PC-9 (cell line): ENCODE measurements at regions of chr6 and their contacts with region 1.

Region 1: DNA sequence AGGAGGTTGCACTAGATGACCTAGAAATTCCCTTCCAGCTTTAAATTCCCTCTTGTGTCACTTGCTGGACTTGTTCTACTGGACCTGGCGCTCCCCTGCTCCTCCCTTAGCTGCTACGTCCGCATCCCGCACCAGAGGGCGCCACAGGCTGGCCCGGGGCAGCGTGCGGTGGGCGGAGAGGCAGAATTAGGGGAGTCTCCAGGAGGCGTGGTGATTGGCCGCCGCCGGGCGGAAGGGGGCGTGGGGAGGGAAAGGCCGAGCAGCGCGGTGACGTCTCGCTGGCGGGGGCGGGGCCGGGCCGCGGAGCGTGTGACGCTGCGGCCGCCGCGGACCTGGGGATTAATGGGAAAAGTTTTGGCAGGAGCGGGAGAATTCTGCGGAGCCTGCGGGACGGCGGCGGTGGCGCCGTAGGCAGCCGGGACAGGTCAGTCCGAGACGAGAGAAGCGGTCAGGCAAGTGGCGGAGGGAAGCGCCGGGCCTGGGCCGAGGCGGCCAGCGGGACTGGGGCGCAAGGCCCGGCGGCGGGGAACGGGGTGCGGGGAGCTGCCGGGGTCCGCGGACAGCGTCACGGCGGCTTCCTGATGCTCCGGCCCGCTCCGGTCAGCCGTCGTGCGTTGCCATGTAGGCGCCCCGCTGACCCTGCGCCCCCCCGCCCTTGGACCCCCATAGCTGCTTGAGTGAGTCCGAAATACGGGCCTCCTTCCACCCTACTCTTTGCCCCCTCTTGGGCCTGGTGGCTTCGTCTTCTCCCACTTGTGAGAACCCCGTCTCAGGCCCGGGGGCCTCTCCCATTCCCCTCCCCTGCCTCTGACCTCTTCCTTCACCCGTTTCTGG is at the start of gene PPARD:
- DNase-seq: peak; percentile 91 to 99
- H3K4me3 ChIP-seq: peak within 1 kb of the TSS; percentile 77
- H3K27ac ChIP-seq: peak within 1 kb of the TSS; percentile 95
- H3K4me1 ChIP-seq: peaks cover 25% of the 10 kb centered on the region
- H3K27me3 ChIP-seq: no peaks in the 10 kb centered on the region
- CTCF ChIP-seq: peak; percentile 96
- total RNA-seq, gene PPARD: 18.8 and 24.7 TPM in 2 replicates

Region 2: GRCh38 chr6:35318196-35319171 is 24.0 kb before region 1 on chr6:
- CTCF ChIA-PET with region 1: no interaction called
- POLR2A ChIA-PET with region 1: interaction called, 18 read pairs
- intact Hi-C with region 1: no loop called
- DNase-seq: peak in 1 of 2 experiments; percentile 83
- H3K4me3 ChIP-seq: no peak overlapping the region
- H3K27ac ChIP-seq: no peak overlapping the region
- H3K4me1 ChIP-seq: no peaks in the 10 kb centered on the region
- H3K27me3 ChIP-seq: no peaks in the 10 kb centered on the region
- CTCF ChIP-seq: no peak

Region 3: GRCh38 chr6:35415065-35415991 is 72.9 kb after region 1 on chr6:
- CTCF ChIA-PET with region 1: interaction called, 8 read pairs
- POLR2A ChIA-PET with region 1: no interaction called
- intact Hi-C with region 1: loop called (anchors 1 kb)
- DNase-seq: peak; percentile 55 to 95
- H3K4me3 ChIP-seq: no peak overlapping the region
- H3K27ac ChIP-seq: peak overlapping the region; percentile 68
- H3K4me1 ChIP-seq: peaks cover 15% of the 10 kb centered on the region
- H3K27me3 ChIP-seq: no peaks in the 10 kb centered on the region
- CTCF ChIP-seq: peak; percentile 77

Region 4: DNA sequence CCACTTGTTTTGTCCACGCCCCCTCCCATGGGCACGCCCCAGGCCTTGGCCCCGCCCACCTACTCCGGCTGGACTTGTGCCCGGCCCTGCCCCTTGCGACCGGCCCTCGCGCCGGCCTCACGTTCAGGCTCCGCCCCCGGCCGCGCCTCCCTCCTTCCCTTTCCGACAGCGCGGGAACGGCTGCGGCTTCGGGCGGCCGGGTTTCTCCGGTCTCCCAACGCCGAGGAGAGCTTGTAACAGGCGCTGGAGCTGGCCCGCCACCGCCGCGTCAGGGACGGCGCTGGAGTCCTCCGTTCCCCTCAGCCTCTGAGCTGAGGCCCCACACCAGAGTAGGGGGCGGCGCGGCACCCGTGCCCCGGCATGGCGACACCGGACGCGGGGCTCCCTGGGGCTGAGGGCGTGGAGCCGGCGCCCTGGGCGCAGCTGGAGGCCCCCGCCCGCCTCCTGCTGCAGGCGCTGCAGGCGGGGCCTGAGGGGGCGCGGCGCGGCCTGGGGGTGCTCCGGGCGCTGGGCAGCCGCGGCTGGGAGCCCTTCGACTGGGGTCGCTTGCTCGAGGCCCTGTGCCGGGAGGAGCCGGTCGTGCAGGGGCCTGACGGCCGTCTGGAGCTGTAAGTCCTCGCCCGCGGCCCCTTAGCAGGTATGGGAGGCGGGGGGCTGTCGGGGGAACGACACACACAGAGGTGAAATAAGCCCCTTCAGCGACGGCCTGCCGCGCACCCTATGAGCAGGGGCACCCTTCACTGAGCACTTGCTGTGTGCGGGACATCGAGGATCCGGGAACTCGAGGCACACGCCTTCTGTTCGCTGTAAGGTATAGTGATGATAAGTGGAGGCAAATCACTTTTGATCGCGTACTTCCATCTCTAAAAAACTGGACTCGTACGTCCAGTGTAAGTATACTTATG is 110.0 kb after region 1 on chr6 and contains the start of gene FANCE:
- CTCF ChIA-PET with region 1: interaction called, 25 read pairs
- POLR2A ChIA-PET with region 1: no interaction called
- intact Hi-C with region 1: loop called (anchors 1 kb)
- DNase-seq: peak; percentile 76 to 97
- H3K4me3 ChIP-seq: peak within 1 kb of the TSS; percentile 65
- H3K27ac ChIP-seq: no peak within 1 kb of the TSS
- H3K4me1 ChIP-seq: peaks cover 21% of the 10 kb centered on the region
- H3K27me3 ChIP-seq: no peaks in the 10 kb centered on the region
- CTCF ChIP-seq: no peak
- total RNA-seq, gene FANCE: 6.9 and 9.6 TPM in 2 replicates

Region 5: DNA sequence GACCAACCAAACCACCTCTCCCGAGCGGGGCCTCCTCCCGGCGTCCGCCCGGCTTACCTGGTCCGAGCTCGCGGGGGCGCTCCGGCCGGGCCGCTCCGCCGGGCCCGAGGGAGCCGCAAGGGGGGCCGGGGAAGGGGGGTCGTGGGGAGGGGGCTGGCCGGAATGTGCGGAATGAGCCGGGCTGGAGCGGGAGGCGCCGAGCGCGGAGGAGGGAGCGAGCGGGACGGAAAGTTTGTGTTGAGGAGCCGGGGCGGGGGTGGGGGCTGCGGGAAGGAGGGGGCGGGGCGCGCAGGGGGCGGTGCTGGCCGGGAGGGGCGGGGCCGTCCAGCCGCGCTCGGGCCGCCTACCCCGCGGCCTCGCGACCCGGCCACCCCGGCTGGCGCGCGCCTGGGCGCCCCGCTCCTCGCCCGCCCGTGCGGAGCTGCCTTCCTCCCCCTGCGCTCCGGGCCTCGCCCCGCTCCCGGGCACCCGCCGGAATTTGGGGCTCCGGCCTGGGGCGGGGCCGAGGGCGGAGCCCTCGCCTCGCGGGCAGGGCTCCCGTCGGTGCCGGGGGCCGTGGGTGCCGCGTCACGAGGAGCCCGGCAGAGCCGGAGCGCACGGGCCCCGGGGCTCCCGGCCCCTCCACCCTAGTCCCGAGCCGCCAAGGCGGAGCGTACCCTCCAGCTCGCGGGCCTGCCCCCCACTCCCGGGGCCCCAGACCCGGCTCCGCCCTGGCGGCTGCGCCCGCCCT is 154.5 kb after region 1 on chr6 and contains the start of gene TEAD3:
- CTCF ChIA-PET with region 1: interaction called, 7 read pairs
- POLR2A ChIA-PET with region 1: interaction called, 11 read pairs
- intact Hi-C with region 1: no loop called
- DNase-seq: peak; percentile 51 to 91
- H3K4me3 ChIP-seq: peak within 1 kb of the TSS; percentile 94
- H3K27ac ChIP-seq: peak within 1 kb of the TSS; percentile 88
- H3K4me1 ChIP-seq: peaks cover 30% of the 10 kb centered on the region
- H3K27me3 ChIP-seq: no peaks in the 10 kb centered on the region
- CTCF ChIP-seq: no peak
- total RNA-seq, gene TEAD3: 33.1 and 40.1 TPM in 2 replicates

Region 6: DNA sequence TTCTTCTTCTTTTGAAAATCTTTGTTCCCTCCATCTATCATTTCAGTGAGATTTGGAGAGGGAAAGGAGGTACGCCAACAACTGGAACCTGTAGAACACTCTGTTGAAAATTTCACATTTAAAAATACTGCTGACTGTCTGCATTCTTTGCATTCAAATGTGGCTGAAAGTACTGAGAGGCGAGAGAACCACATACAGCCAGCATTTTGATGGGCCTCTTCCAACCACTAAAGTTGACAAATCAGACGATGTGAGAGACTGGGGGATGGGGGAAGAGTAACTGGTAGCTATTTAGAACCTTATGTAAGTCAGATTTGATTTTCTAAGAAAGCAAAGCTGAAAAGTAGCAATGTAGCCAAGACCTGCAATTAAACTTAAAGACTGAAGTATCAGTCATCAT is 268.8 kb after region 1 on chr6:
- CTCF ChIA-PET with region 1: no interaction called
- POLR2A ChIA-PET with region 1: no interaction called
- intact Hi-C with region 1: no loop called
- DNase-seq: no peak
- H3K4me3 ChIP-seq: no peak overlapping the region
- H3K27ac ChIP-seq: no peak overlapping the region
- H3K4me1 ChIP-seq: peaks cover 10% of the 10 kb centered on the region
- H3K27me3 ChIP-seq: no peaks in the 10 kb centered on the region
- CTCF ChIP-seq: no peak

Region 7: GRCh38 chr6:36216559-36216958 is 874.1 kb after region 1 on chr6:
- CTCF ChIA-PET with region 1: no interaction called
- POLR2A ChIA-PET with region 1: interaction called, 13 read pairs
- intact Hi-C with region 1: no loop called
- DNase-seq: no peak
- H3K4me3 ChIP-seq: no peak overlapping the region
- H3K27ac ChIP-seq: no peak overlapping the region
- H3K4me1 ChIP-seq: no peaks in the 10 kb centered on the region
- H3K27me3 ChIP-seq: no peaks in the 10 kb centered on the region
- CTCF ChIP-seq: no peak